ENCODE measurements at regions of chr12 and their contacts with region 1.

Region 1: DNA sequence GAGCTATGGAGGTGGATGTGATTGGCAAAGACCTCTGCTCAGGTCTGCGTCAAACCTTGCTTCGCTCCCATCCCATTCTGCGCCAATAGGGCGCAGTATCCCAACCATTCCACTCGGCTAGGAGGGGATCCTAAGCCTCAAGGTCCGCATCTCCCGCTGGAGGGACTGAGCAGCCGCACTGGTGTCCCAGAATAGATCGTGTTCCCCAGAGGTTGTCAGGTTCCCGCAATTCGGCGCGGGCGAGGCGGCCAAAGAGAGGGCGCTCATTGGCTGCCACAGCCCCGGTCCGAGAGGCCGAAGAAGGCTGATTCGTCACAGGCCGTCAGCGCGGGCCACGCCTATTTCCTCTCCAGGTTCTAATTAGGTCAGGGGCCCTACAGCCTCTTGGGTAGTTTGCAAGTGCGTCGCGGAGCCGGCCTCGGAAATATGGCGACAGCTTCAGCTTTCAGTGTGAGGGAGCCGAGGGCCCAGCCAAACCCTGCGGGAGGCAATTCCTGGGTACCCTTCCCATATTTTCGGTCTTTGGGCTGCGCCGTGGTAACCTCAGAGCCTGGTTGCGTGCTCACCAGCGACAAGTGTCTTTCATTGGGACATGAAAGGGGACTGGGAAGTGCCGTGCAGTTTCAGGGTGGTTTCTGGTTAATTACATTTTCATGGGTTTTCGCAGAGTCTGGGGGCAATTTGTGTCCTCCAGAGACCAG is 5.0 kb downstream of the OR10AD1 start:
- DNase-seq: peak; percentile 86
- ATAC-seq: peak; percentile 98
- H3K4me3 Mint-ChIP-seq: peak overlapping the region; percentile 89
- H3K27ac Mint-ChIP-seq: peak overlapping the region; percentile 90
- H3K4me1 Mint-ChIP-seq: peaks cover 39% of the 10 kb centered on the region
- H3K27me3 Mint-ChIP-seq: peaks cover 14% of the 10 kb centered on the region

Region 2: GRCh38 chr12:48183091-48183875 is 14.8 kb before region 1 on chr12 and contains the start of gene CCDC184:
- POLR2A ChIA-PET with region 1: interaction called, 10 read pairs
- DNase-seq: peak; percentile 76
- ATAC-seq: peak; percentile 70
- H3K4me3 Mint-ChIP-seq: peak within 1 kb of the TSS; percentile 93
- H3K27ac Mint-ChIP-seq: peak within 1 kb of the TSS; percentile 39
- H3K4me1 Mint-ChIP-seq: peaks cover 15% of the 10 kb centered on the region
- H3K27me3 Mint-ChIP-seq: peaks cover 49% of the 10 kb centered on the region
- total RNA-seq, gene CCDC184: 0.57 to 0.58 TPM

Region 3: GRCh38 chr12:48311313-48311712 is 113.2 kb after region 1 on chr12:
- POLR2A ChIA-PET with region 1: no interaction called
- DNase-seq: no peak
- ATAC-seq: no peak
- H3K4me3 Mint-ChIP-seq: no peak overlapping the region
- H3K27ac Mint-ChIP-seq: no peak overlapping the region
- H3K4me1 Mint-ChIP-seq: no peaks in the 10 kb centered on the region
- H3K27me3 Mint-ChIP-seq: peaks cover 2% of the 10 kb centered on the region